Activated B cell treated with CpG ODN at 0.5 μM for 24 hours (primary cell): ENCODE measurements at regions of chr12 and their contacts with region 1.

Region 1: DNA sequence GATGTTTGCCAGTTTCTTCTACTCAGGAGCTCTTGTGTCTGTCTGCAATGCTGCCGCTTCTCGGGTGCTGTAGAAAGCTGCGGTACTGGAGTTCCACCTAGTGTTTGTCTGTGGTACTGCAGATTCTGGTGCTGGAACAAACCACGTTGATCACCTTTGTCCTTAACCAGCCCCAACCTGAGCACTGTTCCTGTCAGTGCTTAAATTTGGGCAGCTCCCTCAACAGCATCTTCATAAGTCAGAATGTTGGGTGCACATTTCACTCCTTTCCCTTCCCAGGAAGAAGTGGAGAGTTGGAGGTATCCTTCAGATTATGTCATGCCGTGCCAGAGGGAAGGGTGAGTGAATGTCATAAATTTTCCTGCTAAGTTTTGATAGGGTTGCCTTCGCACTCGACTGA is 48.7 kb upstream of the LALBA start:
- DNase-seq: peak; percentile 27
- ATAC-seq: peak; percentile 79
- H3K4me3 Mint-ChIP-seq: no peak overlapping the region
- H3K27ac Mint-ChIP-seq: no peak overlapping the region
- H3K4me1 Mint-ChIP-seq: no peaks in the 10 kb centered on the region
- H3K27me3 Mint-ChIP-seq: peaks cover 23% of the 10 kb centered on the region
- CTCF ChIP-seq: peak; percentile 90

Region 2: DNA sequence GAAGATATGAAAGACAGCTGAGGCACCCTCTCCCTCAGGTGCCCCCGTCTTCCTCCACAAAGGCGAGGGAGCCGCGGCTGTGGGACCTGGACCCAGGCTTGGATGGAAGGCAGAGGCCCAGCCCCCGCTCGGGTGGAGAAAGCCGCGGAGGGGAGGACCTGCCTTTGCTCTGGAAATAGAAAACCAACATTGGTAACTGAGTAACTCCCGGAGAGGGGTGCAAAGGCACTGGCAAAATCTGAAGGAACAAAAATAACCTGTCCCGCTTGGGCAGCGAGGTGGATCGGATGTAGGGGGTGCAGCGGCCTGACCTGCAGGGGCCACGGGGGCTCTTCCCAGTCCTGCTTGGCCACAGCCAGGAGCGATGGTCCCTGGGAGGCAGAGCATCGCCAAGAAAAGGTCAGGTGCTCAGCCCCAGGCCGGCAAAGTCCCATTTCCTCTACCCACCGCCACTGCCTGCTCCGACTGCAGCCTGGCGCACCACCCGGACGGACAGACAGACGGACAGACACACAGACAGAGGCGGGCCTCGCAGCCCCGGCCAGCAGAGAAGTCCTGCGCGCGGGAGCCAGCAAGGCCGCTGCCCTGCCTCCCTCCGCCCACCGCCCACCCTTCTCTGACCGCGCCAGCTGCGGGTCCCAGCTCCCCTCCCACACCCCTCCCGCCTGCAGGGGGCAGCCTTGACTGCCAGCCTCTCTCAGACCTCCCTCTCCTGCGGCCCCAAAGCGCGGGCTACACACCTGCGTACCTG is 676.5 kb before region 1 on chr12:
- CTCF ChIA-PET with region 1: interaction called, 4 read pairs
- POLR2A ChIA-PET with region 1: no interaction called
- intact Hi-C with region 1: loop called (anchors 2 kb)
- DNase-seq: peak; percentile 25
- ATAC-seq: peak; percentile 56
- H3K4me3 Mint-ChIP-seq: no peak overlapping the region
- H3K27ac Mint-ChIP-seq: no peak overlapping the region
- H3K4me1 Mint-ChIP-seq: no peaks in the 10 kb centered on the region
- H3K27me3 Mint-ChIP-seq: peaks cover 16% of the 10 kb centered on the region
- CTCF ChIP-seq: no peak

Region 3: GRCh38 chr12:48084066-48084465 is 534.5 kb before region 1 on chr12:
- CTCF ChIA-PET with region 1: interaction called, 9 read pairs
- POLR2A ChIA-PET with region 1: interaction called, 6 read pairs
- intact Hi-C with region 1: loop called (anchors 5 kb)
- DNase-seq: no peak
- ATAC-seq: peak; percentile 28
- H3K4me3 Mint-ChIP-seq: no peak overlapping the region
- H3K27ac Mint-ChIP-seq: no peak overlapping the region
- H3K4me1 Mint-ChIP-seq: peaks cover 11% of the 10 kb centered on the region
- H3K27me3 Mint-ChIP-seq: no peaks in the 10 kb centered on the region
- CTCF ChIP-seq: no peak

Region 4: DNA sequence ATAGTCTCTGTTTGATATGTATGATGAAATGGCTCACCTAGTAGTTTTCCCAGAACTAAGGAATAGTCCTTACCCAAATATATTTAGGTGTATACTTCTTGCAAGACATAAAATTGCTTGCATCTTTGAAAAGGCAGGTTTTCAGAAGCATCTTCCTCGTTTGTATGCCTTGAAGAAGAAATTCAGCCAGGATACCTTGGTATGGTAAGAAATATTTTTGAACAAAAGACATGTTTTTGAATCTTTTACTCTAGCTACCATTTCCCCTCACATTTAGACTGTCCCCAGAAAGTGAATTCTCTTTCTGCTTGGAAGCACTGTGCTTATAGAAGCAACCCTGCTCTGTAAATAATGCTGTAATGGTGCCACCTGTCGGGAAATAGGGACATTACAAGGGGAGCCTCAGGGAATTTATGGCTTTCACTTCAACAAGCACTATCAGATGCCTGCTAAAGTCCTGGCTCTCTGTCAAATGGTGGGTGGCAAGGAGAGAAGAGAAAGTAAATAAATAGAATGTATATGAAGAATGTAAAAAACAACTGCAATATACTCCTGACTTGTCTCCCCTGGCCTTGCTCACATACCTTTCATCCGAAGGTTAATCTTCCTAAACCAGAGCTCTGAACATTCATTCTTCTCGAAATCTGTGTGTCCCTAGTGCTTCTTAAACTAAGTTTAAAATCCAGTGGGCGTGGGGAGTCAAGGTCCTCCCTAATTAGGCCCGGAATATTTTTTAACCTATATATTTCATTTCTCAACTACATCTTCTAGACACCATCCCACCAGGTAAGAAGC is 429.0 kb before region 1 on chr12:
- CTCF ChIA-PET with region 1: interaction called, 3 read pairs
- POLR2A ChIA-PET with region 1: no interaction called
- intact Hi-C with region 1: loop called (anchors 2 kb)
- DNase-seq: peak; percentile 38
- ATAC-seq: peak; percentile 84
- H3K4me3 Mint-ChIP-seq: no peak overlapping the region
- H3K27ac Mint-ChIP-seq: no peak overlapping the region
- H3K4me1 Mint-ChIP-seq: peaks cover 17% of the 10 kb centered on the region
- H3K27me3 Mint-ChIP-seq: peaks cover 23% of the 10 kb centered on the region
- CTCF ChIP-seq: no peak

Region 5: DNA sequence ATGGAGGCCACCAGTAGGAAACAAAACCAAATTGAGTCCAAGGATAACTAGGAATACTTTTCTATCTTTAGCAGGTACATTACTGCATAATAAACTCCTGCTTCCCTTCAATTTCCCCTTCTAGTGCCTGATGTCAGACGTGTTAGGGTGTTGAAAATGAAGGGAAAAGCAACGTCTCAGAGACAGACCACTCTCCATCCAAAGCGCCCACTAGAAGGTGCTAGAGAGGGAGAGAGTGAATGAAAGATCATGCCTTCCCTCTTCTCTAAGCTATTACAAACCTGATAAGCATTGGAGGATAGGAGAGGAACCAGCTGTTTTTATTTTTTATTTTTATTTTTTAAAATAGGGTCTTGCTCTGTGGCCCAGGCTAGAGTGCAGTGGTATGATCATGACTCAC is 331.9 kb before region 1 on chr12:
- CTCF ChIA-PET with region 1: interaction called, 15 read pairs
- POLR2A ChIA-PET with region 1: no interaction called
- intact Hi-C with region 1: no loop called
- DNase-seq: no peak
- ATAC-seq: no peak
- H3K4me3 Mint-ChIP-seq: no peak overlapping the region
- H3K27ac Mint-ChIP-seq: no peak overlapping the region
- H3K4me1 Mint-ChIP-seq: peaks cover 5% of the 10 kb centered on the region
- H3K27me3 Mint-ChIP-seq: peaks cover 22% of the 10 kb centered on the region
- CTCF ChIP-seq: no peak

Region 6: DNA sequence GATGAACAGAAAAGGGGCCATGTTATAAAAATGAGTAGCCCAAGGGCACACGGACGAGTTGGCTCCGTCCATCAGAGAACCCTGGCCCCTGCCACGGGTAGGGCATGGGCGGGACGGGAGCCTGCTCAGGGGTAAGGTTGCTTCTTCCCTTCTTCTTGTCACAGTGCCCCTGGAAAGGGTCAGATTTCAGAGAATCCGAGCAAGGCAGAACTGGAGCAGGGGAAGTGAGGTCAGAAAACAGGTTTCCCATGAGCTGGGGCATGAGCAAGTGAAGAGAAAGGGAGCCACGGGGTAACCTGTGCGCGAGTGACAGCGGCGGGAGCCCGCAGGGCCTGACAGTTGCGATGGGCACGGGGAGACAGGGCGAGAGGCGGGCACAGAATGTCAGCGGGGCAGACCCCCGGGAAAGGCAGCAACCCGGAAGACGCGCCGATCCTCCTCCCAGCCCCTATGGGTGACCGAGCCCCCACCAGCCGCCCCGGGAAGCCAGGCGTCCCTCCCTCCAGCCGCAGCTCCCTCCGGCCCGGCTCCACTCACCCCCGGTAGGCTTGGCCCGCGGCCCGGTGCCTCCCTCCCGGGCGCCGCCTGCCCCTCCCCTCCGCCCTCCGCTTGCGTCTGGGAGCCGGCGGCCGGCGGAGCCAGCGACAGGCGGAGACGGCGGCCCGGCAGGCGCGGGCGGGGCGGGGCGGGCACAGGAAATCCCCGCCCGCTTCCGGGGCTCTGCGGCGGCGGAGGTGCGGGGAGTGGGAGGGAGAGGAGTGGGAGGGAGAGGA is 268.1 kb before region 1 on chr12 and contains the start of gene ZNF641:
- CTCF ChIA-PET with region 1: no interaction called
- POLR2A ChIA-PET with region 1: no interaction called
- intact Hi-C with region 1: loop called (anchors 10 kb)
- DNase-seq: peak; percentile 73
- ATAC-seq: peak; percentile 87
- H3K4me3 Mint-ChIP-seq: peak within 1 kb of the TSS; percentile 96
- H3K27ac Mint-ChIP-seq: peak within 1 kb of the TSS; percentile 90
- H3K4me1 Mint-ChIP-seq: peaks cover 25% of the 10 kb centered on the region
- H3K27me3 Mint-ChIP-seq: no peaks in the 10 kb centered on the region
- CTCF ChIP-seq: no peak
- total RNA-seq, gene ZNF641: 27.6 and 34.5 TPM in 2 replicates

Region 7: GRCh38 chr12:48542300-48542928 is 76.1 kb before region 1 on chr12:
- CTCF ChIA-PET with region 1: interaction called, 4 read pairs
- POLR2A ChIA-PET with region 1: no interaction called
- intact Hi-C with region 1: loop called (anchors 1 kb)
- DNase-seq: no peak
- ATAC-seq: no peak
- H3K4me3 Mint-ChIP-seq: no peak overlapping the region
- H3K27ac Mint-ChIP-seq: no peak overlapping the region
- H3K4me1 Mint-ChIP-seq: no peaks in the 10 kb centered on the region
- H3K27me3 Mint-ChIP-seq: peaks cover 3% of the 10 kb centered on the region
- CTCF ChIP-seq: no peak